Endothelial cell of umbilical vein (primary cell): ENCODE measurements at regions of chr3 and their contacts with region 1.

Region 1: GRCh38 chr3:171772427-171773056 is 37.7 kb downstream of the PLD1 start:
- DNase-seq: peak; percentile 82
- H3K4me3 ChIP-seq: no peak overlapping the region
- H3K27ac ChIP-seq: no peak overlapping the region
- H3K4me1 ChIP-seq: peaks cover 26% of the 10 kb centered on the region
- H3K27me3 ChIP-seq: no peaks in the 10 kb centered on the region
- CTCF ChIP-seq: peak; percentile 62 to 69
- POLR2A ChIP-seq: no peak

Region 2: DNA sequence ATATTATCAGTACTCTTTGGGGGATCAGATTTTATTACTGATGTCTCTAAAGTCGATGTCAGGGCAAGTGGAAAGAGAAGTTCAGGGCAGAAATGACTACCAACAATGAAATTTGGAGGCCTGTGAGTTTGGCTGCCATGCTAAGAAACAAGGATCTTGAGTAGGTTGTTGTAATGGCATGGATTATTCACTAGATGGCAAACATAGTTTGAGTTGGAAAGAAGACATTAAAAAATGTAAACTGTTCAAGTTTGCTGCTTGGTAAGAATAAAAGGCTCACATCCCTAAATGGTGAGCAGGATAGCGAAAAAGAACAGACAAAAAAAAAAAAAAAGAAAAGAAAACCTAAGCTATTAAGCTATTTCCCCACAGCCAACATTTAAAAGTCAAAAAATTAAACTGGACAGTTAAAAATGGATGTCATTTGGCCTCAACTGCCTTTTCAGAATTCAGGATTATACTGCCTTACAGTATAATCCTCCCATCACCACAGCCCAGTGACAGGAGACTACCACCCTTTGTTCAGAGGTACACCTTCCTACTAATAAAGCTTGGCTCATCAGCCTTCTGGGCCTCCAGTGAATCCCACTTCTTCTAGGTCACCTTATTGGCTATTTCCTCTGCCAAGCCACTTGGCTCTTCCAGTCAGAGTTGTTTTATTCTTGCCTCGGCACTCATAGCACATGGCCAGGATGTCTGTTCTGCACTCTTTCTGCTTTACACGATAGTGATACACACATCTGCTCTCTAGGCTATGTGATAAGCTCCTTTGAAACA is 126.0 kb before region 1 on chr3:
- CTCF ChIA-PET with region 1: interaction called, 40 read pairs
- POLR2A ChIA-PET with region 1: no interaction called
- dilution Hi-C with region 1: no loop called
- intact Hi-C with region 1: loop called (anchors 1 kb)
- DNase-seq: peak; percentile 70
- H3K4me3 ChIP-seq: no peak overlapping the region
- H3K27ac ChIP-seq: no peak overlapping the region
- H3K4me1 ChIP-seq: peaks cover 3% of the 10 kb centered on the region
- H3K27me3 ChIP-seq: no peaks in the 10 kb centered on the region
- CTCF ChIP-seq: peak; percentile 15 to 45
- POLR2A ChIP-seq: no peak

Region 3: DNA sequence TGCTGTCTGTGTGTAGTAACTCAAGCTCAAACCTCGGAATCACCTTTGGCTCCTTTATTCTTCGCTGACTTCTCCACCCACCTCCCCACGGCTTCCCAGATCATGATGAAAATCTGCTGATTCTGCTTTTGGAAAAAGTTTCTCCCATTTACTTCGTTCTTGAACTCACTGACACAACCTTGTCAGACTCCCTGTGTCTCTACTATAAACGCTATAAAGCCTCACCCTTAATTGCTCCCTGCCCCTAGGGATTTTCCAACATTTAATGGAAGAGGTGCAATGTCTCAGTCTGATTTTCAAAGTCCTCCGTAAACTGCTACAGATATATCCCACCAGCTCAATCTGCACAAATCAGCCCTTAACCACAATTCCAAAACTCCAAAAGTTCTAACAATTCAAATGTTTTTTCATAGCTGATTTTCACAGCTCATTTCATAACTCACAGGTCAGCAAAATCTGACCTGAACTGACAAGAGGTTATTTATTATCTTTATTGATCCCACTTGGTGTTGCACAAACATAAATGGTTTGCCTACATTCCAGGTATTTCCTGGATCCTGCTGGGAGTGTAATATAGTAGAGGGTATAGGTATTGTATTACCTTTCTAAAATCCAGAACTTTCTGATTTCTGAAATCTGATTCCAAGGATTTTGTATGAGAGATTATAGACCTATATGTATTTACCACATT is 91.7 kb before region 1 on chr3:
- CTCF ChIA-PET with region 1: interaction called, 11 read pairs
- POLR2A ChIA-PET with region 1: no interaction called
- dilution Hi-C with region 1: no loop called
- intact Hi-C with region 1: no loop called
- DNase-seq: no peak
- H3K4me3 ChIP-seq: no peak overlapping the region
- H3K27ac ChIP-seq: no peak overlapping the region
- H3K4me1 ChIP-seq: no peaks in the 10 kb centered on the region
- H3K27me3 ChIP-seq: no peaks in the 10 kb centered on the region
- CTCF ChIP-seq: no peak
- POLR2A ChIP-seq: no peak

Region 4: DNA sequence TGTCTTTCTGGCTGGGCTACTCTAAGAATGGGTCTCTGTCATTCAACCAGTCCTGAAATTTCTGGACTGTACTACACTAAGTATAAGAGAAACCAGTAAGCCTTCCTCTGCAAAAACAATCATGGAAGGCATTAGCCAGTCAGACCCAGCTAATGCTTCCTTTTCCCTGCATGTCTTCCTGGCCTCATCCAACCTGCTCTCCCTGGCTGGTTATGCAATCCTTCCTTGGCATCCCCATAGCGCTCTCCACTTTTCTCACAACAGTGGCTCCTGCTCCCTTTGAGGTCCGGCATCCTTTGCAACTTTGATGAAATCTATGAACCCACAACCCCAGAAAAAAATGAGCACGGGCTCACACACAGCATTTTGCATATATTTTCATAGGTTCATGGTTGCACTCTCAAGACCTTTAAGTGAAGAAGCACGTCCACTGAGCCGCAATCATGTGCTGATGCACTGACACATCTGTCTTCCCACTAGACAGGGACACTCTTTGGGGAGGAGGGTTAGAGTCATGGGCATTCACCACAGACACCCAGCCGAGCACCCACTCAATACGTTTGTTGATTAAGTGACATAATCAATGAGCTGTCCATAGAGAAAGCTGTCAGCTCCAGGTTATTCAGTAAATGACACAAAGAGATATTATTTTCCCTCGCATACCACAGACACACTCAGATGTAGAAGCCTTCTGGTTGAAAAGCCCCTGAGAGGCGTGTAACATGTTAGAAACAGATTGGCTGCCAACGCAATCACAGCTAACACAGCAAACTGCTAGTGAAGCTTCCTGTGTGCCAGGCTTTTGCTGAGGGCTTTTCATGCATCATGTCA is 29.0 kb before region 1 on chr3:
- CTCF ChIA-PET with region 1: interaction called, 30 read pairs
- POLR2A ChIA-PET with region 1: no interaction called
- dilution Hi-C with region 1: no loop called
- intact Hi-C with region 1: no loop called
- DNase-seq: no peak
- H3K4me3 ChIP-seq: no peak overlapping the region
- H3K27ac ChIP-seq: no peak overlapping the region
- H3K4me1 ChIP-seq: peaks cover 3% of the 10 kb centered on the region
- H3K27me3 ChIP-seq: no peaks in the 10 kb centered on the region
- CTCF ChIP-seq: no peak
- POLR2A ChIP-seq: no peak

Region 5: DNA sequence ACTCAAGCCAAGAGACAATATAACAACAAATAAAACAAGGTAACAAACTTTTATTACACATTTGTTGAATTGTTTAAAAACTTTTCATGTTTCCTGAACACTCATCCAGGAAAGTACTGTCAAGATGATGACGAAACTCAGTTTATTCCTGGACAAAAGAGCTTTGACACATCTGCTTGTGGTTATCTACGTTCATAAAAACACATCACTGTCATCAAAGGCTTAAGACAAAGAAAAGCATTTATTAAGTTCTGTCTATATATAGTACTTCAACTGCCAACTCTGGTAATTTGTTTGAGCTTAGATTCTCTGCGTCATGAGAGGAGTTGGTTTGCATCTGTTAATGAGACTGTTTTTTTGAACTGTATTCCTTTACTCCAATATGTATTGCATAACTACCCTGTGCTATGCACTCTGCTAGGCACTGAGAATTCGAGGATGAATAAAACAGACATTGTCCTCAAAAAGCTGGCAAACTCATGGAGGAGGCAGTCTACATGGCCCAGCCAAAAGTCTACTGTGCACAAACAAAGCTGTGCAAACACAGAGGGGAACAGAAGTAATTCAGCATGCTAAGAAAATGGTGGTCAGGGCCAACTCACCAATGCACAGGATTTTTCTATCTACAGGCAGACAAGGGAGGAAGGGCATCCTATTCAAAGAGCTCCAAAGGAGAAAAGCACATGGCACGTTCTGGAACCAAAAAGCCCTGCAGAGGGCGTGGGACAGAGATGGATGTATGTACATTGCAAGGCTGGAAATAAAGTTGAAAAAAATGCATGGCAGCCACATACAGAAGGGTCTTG is 16.2 kb after region 1 on chr3:
- CTCF ChIA-PET with region 1: interaction called, 23 read pairs
- POLR2A ChIA-PET with region 1: interaction called, 6 read pairs
- dilution Hi-C with region 1: no loop called
- intact Hi-C with region 1: no loop called
- DNase-seq: peak; percentile 92
- H3K4me3 ChIP-seq: no peak overlapping the region
- H3K27ac ChIP-seq: peak overlapping the region; percentile 99
- H3K4me1 ChIP-seq: peaks cover 75% of the 10 kb centered on the region
- H3K27me3 ChIP-seq: no peaks in the 10 kb centered on the region
- CTCF ChIP-seq: no peak
- POLR2A ChIP-seq: no peak

Region 6: DNA sequence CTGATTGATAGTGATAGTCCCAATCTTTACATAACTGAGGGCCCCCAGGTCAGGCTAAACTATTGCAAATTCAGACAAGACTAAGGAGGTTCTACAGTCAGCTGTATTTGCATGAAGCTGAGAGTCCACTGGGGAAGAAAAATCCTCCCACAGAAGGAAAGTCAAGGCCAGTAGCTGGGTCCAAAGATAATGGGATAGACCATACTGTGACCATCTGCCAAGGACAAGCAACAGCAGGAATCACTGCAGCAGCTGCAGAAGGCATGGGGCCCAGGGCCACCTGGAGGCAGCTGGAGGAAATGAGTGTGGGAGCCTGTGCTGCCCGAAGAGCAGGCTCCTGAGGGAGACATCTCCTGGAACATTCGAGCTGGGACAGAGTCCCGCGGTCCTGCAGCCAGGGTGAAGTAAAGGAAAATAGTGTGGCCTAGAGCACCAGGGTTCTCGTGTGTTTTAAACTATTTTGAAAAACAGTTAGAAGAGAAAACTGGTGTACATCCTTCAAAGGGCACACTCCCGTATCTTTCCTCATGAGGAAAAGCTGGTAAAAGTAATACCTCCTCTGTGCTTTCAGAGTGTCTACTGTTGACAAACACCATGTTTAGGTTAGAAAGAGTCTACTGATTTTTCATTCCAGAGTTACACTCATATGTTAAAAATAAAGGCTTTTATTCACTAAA is 57.4 kb after region 1 on chr3:
- CTCF ChIA-PET with region 1: interaction called, 62 read pairs
- POLR2A ChIA-PET with region 1: no interaction called
- dilution Hi-C with region 1: no loop called
- intact Hi-C with region 1: no loop called
- DNase-seq: peak; percentile 96
- H3K4me3 ChIP-seq: no peak overlapping the region
- H3K27ac ChIP-seq: peak overlapping the region; percentile 74
- H3K4me1 ChIP-seq: peaks cover 51% of the 10 kb centered on the region
- H3K27me3 ChIP-seq: no peaks in the 10 kb centered on the region
- CTCF ChIP-seq: peak; percentile 74 to 81
- POLR2A ChIP-seq: no peak

Region 7: GRCh38 chr3:171867981-171868380 is 95.4 kb after region 1 on chr3:
- CTCF ChIA-PET with region 1: no interaction called
- POLR2A ChIA-PET with region 1: no interaction called
- dilution Hi-C with region 1: no loop called
- intact Hi-C with region 1: no loop called
- DNase-seq: no peak
- H3K4me3 ChIP-seq: no peak overlapping the region
- H3K27ac ChIP-seq: no peak overlapping the region
- H3K4me1 ChIP-seq: peaks cover 49% of the 10 kb centered on the region
- H3K27me3 ChIP-seq: no peaks in the 10 kb centered on the region
- CTCF ChIP-seq: peak in 1 of 2 donors; percentile 23
- POLR2A ChIP-seq: no peak